PC-9 (cell line): ENCODE measurements at regions of chr16 and their contacts with region 1.

Region 1: GRCh38 chr16:85225257-85225656 is 113.0 kb upstream of the CIBAR2 start:
- DNase-seq: no peak
- H3K4me3 ChIP-seq: no peak overlapping the region
- H3K27ac ChIP-seq: no peak overlapping the region
- H3K4me1 ChIP-seq: no peaks in the 10 kb centered on the region
- H3K27me3 ChIP-seq: no peaks in the 10 kb centered on the region
- CTCF ChIP-seq: no peak

Region 2: GRCh38 chr16:86010680-86011141 is 785.5 kb after region 1 on chr16:
- CTCF ChIA-PET with region 1: interaction called, 11 read pairs
- POLR2A ChIA-PET with region 1: no interaction called
- intact Hi-C with region 1: no loop called
- DNase-seq: no peak
- H3K4me3 ChIP-seq: no peak overlapping the region
- H3K27ac ChIP-seq: no peak overlapping the region
- H3K4me1 ChIP-seq: no peaks in the 10 kb centered on the region
- H3K27me3 ChIP-seq: peaks cover 64% of the 10 kb centered on the region
- CTCF ChIP-seq: no peak